Activated B cell treated with CpG ODN at 0.5 μM for 24 hours (primary cell): ENCODE measurements at regions of chr11 and their contacts with region 1.

Region 1: GRCh38 chr11:11022125-11022730 is 164.4 kb upstream of the ZBED5 start:
- DNase-seq: no peak
- ATAC-seq: no peak
- H3K4me3 Mint-ChIP-seq: no peak overlapping the region
- H3K27ac Mint-ChIP-seq: no peak overlapping the region
- H3K4me1 Mint-ChIP-seq: no peaks in the 10 kb centered on the region
- H3K27me3 Mint-ChIP-seq: peaks cover 5% of the 10 kb centered on the region
- CTCF ChIP-seq: peak; percentile 27

Region 2: GRCh38 chr11:10770626-10771254 is 251.5 kb before region 1 on chr11:
- CTCF ChIA-PET with region 1: interaction called, 7 read pairs
- POLR2A ChIA-PET with region 1: no interaction called
- intact Hi-C with region 1: loop called (anchors 5 kb)
- DNase-seq: no peak
- ATAC-seq: peak; percentile 28
- H3K4me3 Mint-ChIP-seq: no peak overlapping the region
- H3K27ac Mint-ChIP-seq: no peak overlapping the region
- H3K4me1 Mint-ChIP-seq: peaks cover 3% of the 10 kb centered on the region
- H3K27me3 Mint-ChIP-seq: no peaks in the 10 kb centered on the region
- CTCF ChIP-seq: no peak

Region 3: DNA sequence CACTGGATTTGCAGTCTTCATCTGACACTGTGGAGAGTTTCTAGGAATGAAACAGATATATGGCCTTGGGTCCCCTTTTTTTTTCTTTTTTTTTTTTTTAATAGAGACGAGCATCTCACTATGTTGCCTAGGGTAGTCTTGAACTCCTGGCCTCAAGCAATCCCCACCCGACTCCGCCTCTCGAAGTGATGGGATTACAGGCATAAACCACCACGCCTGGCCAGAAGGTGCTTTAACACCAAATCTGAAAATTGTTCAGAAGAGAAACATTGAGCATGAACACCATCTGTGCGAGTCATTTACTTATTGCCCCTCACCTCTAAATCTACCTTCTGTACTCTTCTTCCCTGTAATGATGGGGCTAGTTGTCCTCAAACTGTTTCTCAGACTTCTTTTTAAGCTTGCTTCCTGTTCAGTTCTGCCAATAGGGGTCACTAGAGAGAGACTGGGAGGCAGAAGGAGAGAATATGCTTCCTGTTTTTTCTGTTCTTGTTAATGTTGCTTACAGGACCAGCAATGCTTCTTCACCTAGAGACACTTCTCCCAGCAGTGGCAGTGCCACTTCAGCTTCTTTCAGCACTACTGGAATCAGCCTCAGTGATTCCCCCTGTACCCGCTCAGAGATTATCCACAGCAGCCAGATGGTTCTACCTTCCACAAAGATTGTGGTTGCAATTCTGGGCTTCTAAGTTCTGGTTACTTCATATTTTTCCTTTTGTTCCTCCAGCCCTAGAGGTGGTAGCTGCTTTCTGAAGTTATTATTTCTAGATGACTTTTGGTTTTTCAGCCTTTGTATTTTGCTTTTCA is 143.6 kb before region 1 on chr11:
- CTCF ChIA-PET with region 1: interaction called, 5 read pairs
- POLR2A ChIA-PET with region 1: no interaction called
- intact Hi-C with region 1: loop called (anchors 2 kb)
- DNase-seq: no peak
- ATAC-seq: peak; percentile 84
- H3K4me3 Mint-ChIP-seq: no peak overlapping the region
- H3K27ac Mint-ChIP-seq: no peak overlapping the region
- H3K4me1 Mint-ChIP-seq: peaks cover 13% of the 10 kb centered on the region
- H3K27me3 Mint-ChIP-seq: no peaks in the 10 kb centered on the region
- CTCF ChIP-seq: no peak

Region 4: GRCh38 chr11:11010624-11011127 is 11.6 kb before region 1 on chr11:
- CTCF ChIA-PET with region 1: interaction called, 13 read pairs
- POLR2A ChIA-PET with region 1: interaction called, 7 read pairs
- intact Hi-C with region 1: loop called (anchors 1 kb)
- DNase-seq: no peak
- ATAC-seq: no peak
- H3K4me3 Mint-ChIP-seq: no peak overlapping the region
- H3K27ac Mint-ChIP-seq: no peak overlapping the region
- H3K4me1 Mint-ChIP-seq: peaks cover 24% of the 10 kb centered on the region
- H3K27me3 Mint-ChIP-seq: peaks cover 8% of the 10 kb centered on the region
- CTCF ChIP-seq: no peak

Region 5: DNA sequence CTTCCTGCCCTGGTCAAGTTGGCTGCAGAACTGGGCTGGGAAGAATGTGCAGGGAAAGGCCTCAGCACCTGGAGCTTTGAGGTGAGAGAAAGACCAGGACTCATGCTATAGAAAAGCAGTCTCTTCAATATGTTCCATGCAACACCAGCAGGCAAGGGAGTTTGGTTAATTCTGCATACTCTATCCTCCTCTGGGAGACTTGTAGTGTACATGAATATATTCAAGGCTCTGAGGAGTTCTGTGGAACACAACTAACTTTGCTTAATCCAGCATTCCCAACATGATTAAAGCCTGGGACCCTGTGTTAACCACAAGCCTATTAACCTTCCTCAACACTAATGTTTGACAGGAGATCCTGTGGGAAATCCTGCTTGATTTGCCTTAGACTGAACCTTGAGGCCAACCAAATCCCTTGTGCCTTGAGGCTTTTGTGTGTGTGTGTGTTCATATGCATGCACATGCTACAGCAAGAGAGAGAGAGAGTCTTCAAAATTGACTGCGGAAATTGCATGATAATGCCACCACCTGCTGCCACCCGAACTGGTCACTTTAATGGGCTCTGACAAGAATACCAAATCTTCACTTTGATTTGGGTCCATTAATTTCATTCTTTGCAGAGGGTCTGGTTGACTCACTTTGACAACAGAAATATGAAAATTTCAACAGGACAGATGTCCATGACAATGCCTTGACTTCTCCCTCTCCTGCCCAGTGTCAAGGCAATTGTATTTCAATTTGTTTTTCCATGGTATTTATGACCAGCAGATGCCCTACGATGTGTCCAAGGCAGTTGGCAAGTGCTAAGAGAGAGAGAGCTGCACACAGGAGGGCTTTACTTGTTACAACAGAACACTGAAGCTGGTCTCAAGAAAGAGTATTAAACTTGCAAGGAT is 73.8 kb after region 1 on chr11:
- CTCF ChIA-PET with region 1: no interaction called
- POLR2A ChIA-PET with region 1: no interaction called
- intact Hi-C with region 1: no loop called
- DNase-seq: no peak
- ATAC-seq: no peak
- H3K4me3 Mint-ChIP-seq: no peak overlapping the region
- H3K27ac Mint-ChIP-seq: no peak overlapping the region
- H3K4me1 Mint-ChIP-seq: no peaks in the 10 kb centered on the region
- H3K27me3 Mint-ChIP-seq: peaks cover 13% of the 10 kb centered on the region
- CTCF ChIP-seq: no peak

Region 6: DNA sequence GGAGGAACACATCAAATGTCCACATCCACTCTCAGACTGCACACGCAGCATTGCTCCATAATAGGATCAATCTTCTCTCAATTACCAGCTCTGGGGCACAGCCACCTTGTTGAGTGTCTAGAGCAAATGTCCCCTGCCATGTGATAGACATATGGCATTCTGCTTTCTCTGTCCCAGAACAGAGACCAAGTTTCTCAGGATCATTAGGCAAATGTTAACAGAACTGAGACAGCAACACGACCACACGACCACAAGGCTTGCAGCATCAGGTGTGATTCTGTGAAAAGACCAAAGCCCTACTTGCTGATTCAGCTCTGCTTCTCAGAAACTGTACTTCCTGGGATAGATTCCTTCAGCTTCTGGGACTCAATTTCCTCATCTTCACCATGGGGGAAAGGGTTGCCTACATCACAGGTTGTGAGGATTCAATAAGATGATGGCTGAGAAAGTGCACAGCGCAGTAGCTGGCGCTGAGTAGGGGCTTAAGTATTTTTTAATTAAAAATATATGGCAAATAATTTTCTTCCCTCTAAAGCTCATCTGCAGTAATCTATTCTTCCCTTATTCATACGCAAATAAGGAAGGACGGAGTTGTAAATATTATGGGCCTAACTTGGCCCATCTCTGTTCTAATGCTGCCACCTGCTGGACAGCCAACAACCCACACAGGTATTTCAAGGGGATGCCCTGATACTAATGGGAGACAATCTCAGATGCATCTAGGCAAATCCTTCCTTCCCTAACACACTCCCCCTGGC is 765.3 kb after region 1 on chr11:
- CTCF ChIA-PET with region 1: interaction called, 65 read pairs
- POLR2A ChIA-PET with region 1: no interaction called
- intact Hi-C with region 1: no loop called
- DNase-seq: peak; percentile 33
- ATAC-seq: peak; percentile 85
- H3K4me3 Mint-ChIP-seq: no peak overlapping the region
- H3K27ac Mint-ChIP-seq: no peak overlapping the region
- H3K4me1 Mint-ChIP-seq: no peaks in the 10 kb centered on the region
- H3K27me3 Mint-ChIP-seq: peaks cover 9% of the 10 kb centered on the region
- CTCF ChIP-seq: peak; percentile 81

Region 7: DNA sequence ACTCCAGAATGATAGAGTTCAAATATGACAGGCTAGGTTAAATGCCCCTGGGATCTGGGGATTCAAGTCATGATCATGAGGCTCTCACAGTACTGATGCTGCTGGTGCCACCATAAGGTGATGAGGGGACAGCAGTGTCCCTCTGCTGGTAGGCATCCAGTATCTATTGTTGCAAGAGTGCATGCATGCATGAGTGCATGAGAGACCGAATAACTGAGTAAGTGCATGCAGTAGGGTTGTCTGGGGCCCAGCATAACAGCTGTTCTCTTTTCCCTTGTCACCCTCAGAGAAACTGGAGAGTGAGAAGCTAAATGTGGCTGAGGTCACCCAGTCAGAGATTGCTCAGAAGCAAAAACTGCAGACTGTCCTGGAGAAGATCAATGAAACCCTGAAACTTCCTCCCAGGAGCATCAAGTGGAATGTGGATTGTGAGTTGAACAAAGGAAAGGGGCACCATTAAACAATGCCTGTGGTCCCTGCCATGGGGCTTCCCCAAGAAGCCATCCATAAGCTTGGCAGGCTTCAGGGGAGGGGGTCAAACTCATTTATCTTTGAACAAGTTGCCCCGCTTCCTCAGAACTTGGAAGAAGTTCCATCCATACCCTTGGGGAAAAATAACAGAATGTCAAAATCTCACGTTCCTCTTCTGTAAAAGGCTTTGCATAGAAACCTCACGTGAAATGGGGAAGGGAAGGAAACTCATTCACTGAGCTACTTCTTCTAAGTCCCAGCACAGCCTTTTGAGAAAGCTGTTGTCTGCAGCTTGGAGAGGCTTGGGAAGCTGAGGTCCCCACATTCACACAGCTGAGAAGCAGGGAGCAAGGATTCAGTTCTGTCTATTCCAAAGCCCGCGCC is 1474.2 kb after region 1 on chr11:
- CTCF ChIA-PET with region 1: no interaction called
- POLR2A ChIA-PET with region 1: no interaction called
- intact Hi-C with region 1: no loop called
- DNase-seq: no peak
- ATAC-seq: no peak
- H3K4me3 Mint-ChIP-seq: no peak overlapping the region
- H3K27ac Mint-ChIP-seq: no peak overlapping the region
- H3K4me1 Mint-ChIP-seq: no peaks in the 10 kb centered on the region
- H3K27me3 Mint-ChIP-seq: no peaks in the 10 kb centered on the region
- CTCF ChIP-seq: no peak